Activated T-helper 1 cell treated with anti-CD3 and anti-CD28 coated beads, Interleukin-12 subunit alpha, Interleukin-12 subunit beta, Interleukin-2, Interleukin-4 antibody, amounts not matched to agents 30 ng/mL and 10 ng/mL and 1 ng/mL, durations not matched to agents 14 hours and 24 hours and 36 hours (primary cell): ENCODE measurements at regions of chr2 and their contacts with region 1.

Region 1: DNA sequence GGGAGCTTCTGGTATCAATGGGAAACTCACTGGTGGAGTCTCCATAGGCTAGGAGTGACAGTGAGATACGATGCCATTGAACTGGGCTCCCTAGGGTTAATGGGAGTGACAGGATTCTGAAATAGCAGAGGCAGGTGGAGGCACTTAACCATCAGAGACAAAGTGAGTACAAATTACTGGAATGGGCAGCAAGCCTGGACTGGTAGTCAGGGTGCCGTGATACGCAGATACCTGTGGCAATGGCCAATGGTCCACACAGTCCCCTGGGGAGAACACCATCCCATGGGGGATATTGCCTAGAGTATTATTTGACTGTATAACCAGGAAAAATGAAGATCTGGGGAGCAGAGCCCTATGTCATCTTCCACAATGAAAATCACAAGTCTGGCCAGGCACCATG is 17.3 kb downstream of the CHCHD5 start:
- DNase-seq: no peak
- H3K4me3 Mint-ChIP-seq: no peak overlapping the region
- H3K27ac Mint-ChIP-seq: no peak overlapping the region
- H3K4me1 Mint-ChIP-seq: peaks cover 10% of the 10 kb centered on the region
- H3K27me3 Mint-ChIP-seq: no peaks in the 10 kb centered on the region

Region 2: DNA sequence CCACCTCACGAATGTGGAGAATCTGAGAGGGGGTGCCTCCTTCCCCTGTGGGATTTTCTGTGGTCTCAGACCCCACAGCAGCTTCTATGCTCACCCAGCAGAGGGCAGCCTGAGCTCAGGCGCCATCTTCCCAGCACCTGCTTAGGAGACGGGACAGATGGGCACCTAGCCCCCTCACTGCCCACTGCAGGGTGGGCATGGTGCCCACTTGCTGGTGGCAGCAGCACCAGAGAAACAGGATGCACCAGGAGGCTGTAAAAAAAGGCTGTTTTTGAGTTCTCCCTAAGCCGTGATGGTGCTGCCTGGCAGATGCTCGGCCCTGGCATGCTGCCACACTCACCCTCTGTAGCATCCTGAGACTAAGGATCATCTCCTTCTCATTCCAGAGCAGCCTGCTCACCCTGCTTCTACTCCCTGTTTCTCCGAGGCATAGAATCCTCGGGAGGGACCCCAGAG is 24.9 kb after region 1 on chr2:
- intact Hi-C with region 1: loop called (anchors 1 kb)
- DNase-seq: peak; percentile 59
- H3K4me3 Mint-ChIP-seq: peak overlapping the region; percentile 57
- H3K27ac Mint-ChIP-seq: peak overlapping the region; percentile 40
- H3K4me1 Mint-ChIP-seq: peaks cover 79% of the 10 kb centered on the region
- H3K27me3 Mint-ChIP-seq: peaks cover 2% of the 10 kb centered on the region

Region 3: DNA sequence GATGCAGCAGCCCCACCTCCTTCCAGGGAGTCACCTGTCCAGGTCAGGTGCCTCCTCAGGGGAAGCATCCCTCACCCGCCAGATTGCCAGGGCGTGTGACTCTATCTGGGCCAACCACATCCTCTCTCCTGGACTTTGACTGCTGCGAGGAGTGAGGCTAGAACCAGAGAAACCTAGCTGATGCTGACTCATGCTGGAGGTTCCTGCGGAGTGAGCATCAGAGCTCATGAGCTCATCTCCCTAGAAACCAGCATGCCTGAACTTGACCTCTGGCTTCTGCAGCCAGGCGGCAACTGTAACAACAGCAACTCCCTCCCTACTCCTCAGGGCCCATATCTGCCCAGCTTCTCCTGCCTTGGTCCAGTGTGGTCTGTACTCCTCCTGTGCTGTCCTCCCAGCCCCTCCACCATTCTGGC is 90.8 kb after region 1 on chr2:
- intact Hi-C with region 1: loop called (anchors 1 kb)
- DNase-seq: peak; percentile 73
- H3K4me3 Mint-ChIP-seq: peak overlapping the region; percentile 47
- H3K27ac Mint-ChIP-seq: peak overlapping the region; percentile 89
- H3K4me1 Mint-ChIP-seq: peaks cover 32% of the 10 kb centered on the region
- H3K27me3 Mint-ChIP-seq: no peaks in the 10 kb centered on the region

Region 4: DNA sequence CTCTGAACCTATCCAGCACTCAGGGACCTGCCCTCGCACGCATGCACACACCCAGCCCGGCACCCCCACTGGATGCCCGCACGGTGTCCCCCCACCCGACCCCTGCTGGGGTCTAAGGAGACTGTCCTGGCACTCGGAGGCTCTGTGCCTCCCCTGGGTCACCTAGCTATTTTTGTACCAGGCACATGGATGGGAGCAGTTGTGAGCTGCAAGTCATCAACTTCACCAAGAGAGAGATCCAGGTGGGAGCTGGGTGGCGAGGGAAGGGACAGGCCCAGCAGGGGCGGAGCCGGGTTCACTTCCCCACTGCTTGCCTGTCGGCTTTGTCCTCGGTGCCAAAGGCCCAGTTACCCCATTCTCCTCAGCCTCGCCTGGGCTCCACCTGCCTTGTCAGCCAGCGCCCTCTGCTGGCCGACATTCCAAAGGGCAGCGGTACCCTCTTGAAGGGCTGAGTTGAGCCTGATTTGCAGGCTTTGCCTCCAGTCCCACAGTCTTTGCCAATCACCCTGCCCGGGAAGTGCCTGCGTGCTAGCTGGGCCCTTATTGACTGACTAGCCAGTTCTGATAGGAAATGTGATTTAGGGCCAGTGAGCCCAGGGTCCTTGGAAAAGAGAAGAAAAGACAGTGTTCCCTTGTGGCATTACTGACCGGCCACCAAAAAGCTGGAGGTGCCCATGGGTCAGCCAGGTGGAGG is 124.9 kb after region 1 on chr2:
- intact Hi-C with region 1: loop called (anchors 1 kb)
- DNase-seq: peak; percentile 86
- H3K4me3 Mint-ChIP-seq: no peak overlapping the region
- H3K27ac Mint-ChIP-seq: no peak overlapping the region
- H3K4me1 Mint-ChIP-seq: peaks cover 16% of the 10 kb centered on the region
- H3K27me3 Mint-ChIP-seq: no peaks in the 10 kb centered on the region

Region 5: DNA sequence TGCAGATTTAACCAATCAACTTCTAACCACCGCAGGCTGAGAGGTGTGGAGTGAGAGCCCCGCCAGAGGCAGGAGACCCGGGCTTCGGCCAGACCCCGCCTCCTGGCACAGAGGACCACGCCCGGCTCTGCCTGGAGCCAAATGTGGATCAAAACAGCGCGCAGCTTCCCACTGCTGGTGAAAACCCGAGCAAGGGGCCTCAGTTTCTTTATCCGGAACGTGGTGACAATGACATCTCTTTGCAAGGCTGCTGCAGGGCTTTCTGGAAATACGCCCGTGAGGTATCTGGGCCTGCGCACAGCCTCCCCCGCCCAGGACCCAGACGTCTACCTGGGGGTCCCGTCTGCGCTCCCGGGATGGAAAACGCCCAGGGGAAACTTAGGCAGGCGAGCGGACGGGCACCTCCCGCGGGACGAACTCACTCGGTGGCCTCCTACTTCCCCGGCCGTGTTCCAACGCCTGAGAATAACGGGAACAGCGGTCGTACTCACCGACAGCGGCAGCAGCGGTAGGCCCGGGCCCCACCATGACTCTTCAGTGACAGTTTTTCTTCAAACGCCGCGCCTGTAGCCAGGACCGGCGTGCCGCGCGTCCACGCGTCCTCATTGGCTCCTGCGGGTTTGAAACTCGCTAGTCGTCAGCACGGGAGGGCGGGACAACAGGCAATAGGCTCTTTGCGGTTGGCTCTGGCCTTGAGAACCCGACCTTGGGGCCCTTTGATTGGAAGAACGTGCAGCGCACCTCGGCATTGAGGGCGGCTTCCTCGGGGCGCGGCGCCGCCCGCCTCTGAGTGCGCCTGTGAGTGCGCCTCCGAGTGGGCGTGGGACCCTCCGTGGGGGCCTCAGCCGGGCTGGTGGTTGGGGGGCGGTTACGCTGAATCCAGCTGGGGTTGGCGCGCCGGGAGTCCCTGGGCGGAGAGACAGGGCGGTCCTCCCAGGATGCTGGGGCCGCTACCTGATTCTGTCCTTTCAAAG is 162.6 kb after region 1 on chr2 and contains the start of gene CKAP2L:
- intact Hi-C with region 1: no loop called
- DNase-seq: peak; percentile 95
- H3K4me3 Mint-ChIP-seq: peak within 1 kb of the TSS; percentile 95
- H3K27ac Mint-ChIP-seq: peak within 1 kb of the TSS; percentile 93
- H3K4me1 Mint-ChIP-seq: peaks cover 50% of the 10 kb centered on the region
- H3K27me3 Mint-ChIP-seq: no peaks in the 10 kb centered on the region
- total RNA-seq, gene CKAP2L: 20.9 and 21.2 TPM in 2 replicates

Region 6: GRCh38 chr2:112884869-112885505 is 283.2 kb after region 1 on chr2:
- intact Hi-C with region 1: loop called (anchors 2 kb)
- DNase-seq: peak; percentile 64
- H3K4me3 Mint-ChIP-seq: no peak overlapping the region
- H3K27ac Mint-ChIP-seq: peak overlapping the region; percentile 47
- H3K4me1 Mint-ChIP-seq: peaks cover 31% of the 10 kb centered on the region
- H3K27me3 Mint-ChIP-seq: peaks cover 11% of the 10 kb centered on the region

Region 7: GRCh38 chr2:112941753-112942658 is 340.3 kb after region 1 on chr2:
- intact Hi-C with region 1: loop called (anchors 5 kb)
- DNase-seq: peak; percentile 65
- H3K4me3 Mint-ChIP-seq: no peak overlapping the region
- H3K27ac Mint-ChIP-seq: no peak overlapping the region
- H3K4me1 Mint-ChIP-seq: peaks cover 9% of the 10 kb centered on the region
- H3K27me3 Mint-ChIP-seq: peaks cover 38% of the 10 kb centered on the region

Region 8: DNA sequence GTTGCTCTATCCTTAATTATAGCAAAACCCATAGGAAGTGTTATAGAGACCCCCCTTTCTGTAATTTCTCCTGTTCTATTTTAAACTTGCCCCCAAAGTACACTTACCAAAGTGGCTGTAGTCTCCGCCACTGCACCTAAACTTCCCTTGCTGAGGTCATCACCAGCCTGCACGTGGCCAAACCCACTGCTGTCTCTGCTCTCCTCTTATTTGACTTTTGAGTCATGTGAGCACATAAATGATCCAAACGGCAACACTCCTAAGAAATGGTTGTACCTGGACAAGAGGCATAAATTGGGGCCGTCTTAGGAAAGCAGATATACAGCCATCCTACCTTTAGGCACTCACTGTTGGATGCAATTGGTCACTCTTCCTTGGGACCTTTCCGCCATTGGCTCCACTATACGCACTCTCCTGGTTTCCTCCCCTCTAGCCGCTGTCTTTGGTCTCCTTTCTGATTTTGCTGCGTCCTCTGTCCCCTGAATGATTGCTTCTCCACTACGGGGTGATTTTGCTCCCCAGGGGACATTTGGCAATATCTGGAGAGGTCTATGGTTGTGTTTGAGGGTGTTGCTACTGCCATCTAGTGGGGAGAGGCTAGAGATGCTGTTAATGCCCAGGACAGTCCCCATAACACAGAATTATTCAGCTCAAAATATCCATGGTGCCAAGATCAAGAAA is 356.8 kb after region 1 on chr2:
- intact Hi-C with region 1: loop called (anchors 5 kb)
- DNase-seq: peak; percentile 24
- H3K4me3 Mint-ChIP-seq: no peak overlapping the region
- H3K27ac Mint-ChIP-seq: no peak overlapping the region
- H3K4me1 Mint-ChIP-seq: no peaks in the 10 kb centered on the region
- H3K27me3 Mint-ChIP-seq: peaks cover 7% of the 10 kb centered on the region